Panc1 (cell line): ENCODE measurements at regions of chr6 and their contacts with region 1.

Region 1: DNA sequence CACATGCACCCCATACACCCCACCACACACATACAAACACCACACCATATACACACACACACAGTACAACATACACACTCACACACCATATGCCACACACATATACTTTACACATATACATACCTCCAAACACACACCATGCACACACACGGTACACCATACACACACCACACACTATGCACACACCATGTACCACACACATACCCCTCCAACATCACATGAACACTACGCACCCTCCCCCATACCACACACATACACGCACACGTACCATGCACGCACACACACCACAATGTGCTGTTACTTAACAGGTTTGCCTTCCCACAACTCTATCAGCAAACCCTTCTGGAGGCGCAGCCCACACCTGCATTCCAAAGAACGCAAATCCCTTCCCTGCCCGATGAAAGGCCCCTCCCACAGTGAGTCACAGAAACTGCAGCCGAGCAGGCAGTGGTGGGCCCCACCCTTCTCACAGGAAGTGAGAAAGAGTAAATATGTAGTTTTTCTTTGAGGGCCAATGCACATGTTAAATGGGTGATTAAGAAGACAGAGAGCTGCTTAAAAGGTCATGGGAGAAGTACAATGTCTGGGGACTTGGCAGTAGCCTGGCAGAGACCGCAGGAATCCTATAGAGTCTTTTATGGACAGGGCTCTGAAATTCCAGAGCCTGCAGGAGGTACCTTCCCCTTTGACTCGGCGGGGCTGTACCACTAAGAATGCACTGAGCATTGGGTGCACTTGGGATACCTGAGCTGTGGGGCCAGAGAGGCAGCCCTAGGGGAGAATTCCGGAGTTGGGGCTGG is 34.1 kb upstream of the EZR start:
- DNase-seq: peak; percentile 88
- ATAC-seq: peak; percentile 81
- H3K4me3 ChIP-seq: peak overlapping the region; percentile 2 to 39; a peak in 3 of 4 replicates
- H3K27ac ChIP-seq: peak overlapping the region; percentile 66
- H3K4me1 ChIP-seq: peaks cover 57% of the 10 kb centered on the region
- H3K27me3 ChIP-seq: no peaks in the 10 kb centered on the region
- CTCF ChIP-seq: no peak

Region 2: GRCh38 chr6:158819213-158819909 is 33.9 kb before region 1 on chr6 and contains the start of gene EZR:
- CTCF ChIA-PET with region 1: no interaction called
- POLR2A ChIA-PET with region 1: no interaction called
- in situ Hi-C with region 1: no loop called
- intact Hi-C with region 1: loop called (anchors 5 kb)
- DNase-seq: no peak
- ATAC-seq: peak; percentile 86
- H3K4me3 ChIP-seq: peak within 1 kb of the TSS; percentile 86 to 89
- H3K27ac ChIP-seq: peak within 1 kb of the TSS; percentile 85
- H3K4me1 ChIP-seq: peaks cover 25% of the 10 kb centered on the region
- H3K27me3 ChIP-seq: no peaks in the 10 kb centered on the region
- CTCF ChIP-seq: no peak
- total RNA-seq, gene EZR: 263 TPM

Region 3: DNA sequence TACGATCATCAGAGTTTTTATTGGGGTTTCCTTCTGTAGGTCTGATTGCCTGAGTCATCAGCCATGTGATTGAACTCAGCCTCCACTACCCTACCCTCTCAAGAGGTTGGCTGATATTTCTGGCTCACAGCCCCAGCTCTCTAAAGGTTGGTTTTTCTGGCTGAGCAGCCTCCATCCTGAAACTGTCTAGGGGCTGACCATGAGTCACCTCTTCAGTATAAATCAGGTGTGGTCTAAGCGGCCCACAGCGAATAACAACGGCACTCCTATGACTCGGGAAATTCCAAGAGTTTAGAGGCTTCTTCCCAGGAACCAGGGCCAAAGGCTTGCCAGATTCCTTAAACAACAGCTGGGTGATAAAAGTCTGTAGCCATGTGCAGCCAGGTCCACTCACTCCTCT is 724.3 kb after region 1 on chr6:
- CTCF ChIA-PET with region 1: no interaction called
- POLR2A ChIA-PET with region 1: no interaction called
- in situ Hi-C with region 1: no loop called
- intact Hi-C with region 1: no loop called
- DNase-seq: no peak
- ATAC-seq: no peak; the same call in 1 of the 2 replicates
- H3K4me3 ChIP-seq: no peak overlapping the region
- H3K27ac ChIP-seq: no peak overlapping the region
- H3K4me1 ChIP-seq: no peaks in the 10 kb centered on the region
- H3K27me3 ChIP-seq: 0 out of 2 replicates have a peak, but pooled peaks cover 2% of the 10 kb centered on the region
- CTCF ChIP-seq: no peak